ENCODE measurements at regions of chr6 and their contacts with region 1.

Region 1: DNA sequence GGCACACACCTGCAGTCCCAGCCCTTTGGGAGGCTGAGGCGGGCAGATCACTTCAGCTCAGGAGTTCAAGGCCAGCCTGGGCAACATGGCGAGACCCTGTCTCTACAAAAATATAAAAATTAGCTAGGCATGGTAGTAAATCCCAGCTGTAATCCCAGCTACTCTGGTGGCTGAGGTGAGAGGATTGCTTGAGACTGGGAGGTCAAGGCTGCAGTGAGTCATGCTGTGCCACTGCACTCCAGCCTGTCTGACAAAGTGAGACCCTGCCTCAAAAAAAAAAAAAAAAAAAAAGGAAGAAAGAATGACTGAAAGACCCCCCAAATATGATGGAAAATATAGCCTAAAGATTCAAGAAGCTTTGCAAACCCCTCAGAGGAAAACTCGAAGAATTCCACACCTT is 26.8 kb downstream of the METTL24 start:
- DNase-seq: no peak
- ATAC-seq: no peak
- H3K4me3 ChIP-seq: no peak overlapping the region
- H3K27ac ChIP-seq: no peak overlapping the region
- H3K4me1 ChIP-seq: peaks cover 13% of the 10 kb centered on the region
- H3K27me3 ChIP-seq: no peaks in the 10 kb centered on the region
- CTCF ChIP-seq: no peak

Region 2: GRCh38 chr6:110341663-110342596 is 10.5 kb after region 1 on chr6:
- CTCF ChIA-PET with region 1: interaction called, 4 read pairs
- POLR2A ChIA-PET with region 1: interaction called, 13 read pairs
- in situ Hi-C with region 1: no loop called
- intact Hi-C with region 1: no loop called
- DNase-seq: no peak
- ATAC-seq: peak; percentile 85
- H3K4me3 ChIP-seq: no peak overlapping the region
- H3K27ac ChIP-seq: no peak overlapping the region
- H3K4me1 ChIP-seq: no peaks in the 10 kb centered on the region
- H3K27me3 ChIP-seq: peaks cover 17% of the 10 kb centered on the region
- CTCF ChIP-seq: peak; percentile 68

Region 3: GRCh38 chr6:110799189-110799588 is 467.8 kb after region 1 on chr6:
- CTCF ChIA-PET with region 1: no interaction called
- POLR2A ChIA-PET with region 1: no interaction called
- in situ Hi-C with region 1: no loop called
- intact Hi-C with region 1: no loop called
- DNase-seq: no peak
- ATAC-seq: no peak
- H3K4me3 ChIP-seq: no peak overlapping the region
- H3K27ac ChIP-seq: no peak overlapping the region
- H3K4me1 ChIP-seq: peaks cover 3% of the 10 kb centered on the region; the same call in 1 of the 2 replicates
- H3K27me3 ChIP-seq: no peaks in the 10 kb centered on the region
- CTCF ChIP-seq: no peak

Measured in Panc1 (cell line).